ENCODE measurements at regions of chr2 and their contacts with region 1.

Region 1: GRCh38 chr2:70070541-70071268 is 16.6 kb upstream of the PCBP1 start:
- DNase-seq: peak; percentile 83
- ATAC-seq: peak; percentile 77
- H3K4me3 Mint-ChIP-seq: peak overlapping the region; percentile 68
- H3K27ac Mint-ChIP-seq: peak overlapping the region; percentile 96
- H3K4me1 Mint-ChIP-seq: peaks cover 46% of the 10 kb centered on the region
- H3K27me3 Mint-ChIP-seq: no peaks in the 10 kb centered on the region

Region 2: GRCh38 chr2:69946351-69947077 is 124.2 kb before region 1 on chr2:
- CTCF ChIA-PET with region 1: interaction called, 17 read pairs
- DNase-seq: peak; percentile 89
- ATAC-seq: peak; percentile 94
- H3K4me3 Mint-ChIP-seq: peak overlapping the region; percentile 52
- H3K27ac Mint-ChIP-seq: peak overlapping the region; percentile 93
- H3K4me1 Mint-ChIP-seq: peaks cover 41% of the 10 kb centered on the region
- H3K27me3 Mint-ChIP-seq: no peaks in the 10 kb centered on the region

Region 3: GRCh38 chr2:70043252-70043875 is 27.3 kb before region 1 on chr2:
- CTCF ChIA-PET with region 1: interaction called, 18 read pairs
- DNase-seq: peak; percentile 91
- ATAC-seq: peak; percentile 83
- H3K4me3 Mint-ChIP-seq: peak overlapping the region; percentile 55
- H3K27ac Mint-ChIP-seq: peak overlapping the region; percentile 98
- H3K4me1 Mint-ChIP-seq: peaks cover 67% of the 10 kb centered on the region
- H3K27me3 Mint-ChIP-seq: no peaks in the 10 kb centered on the region

Region 4: DNA sequence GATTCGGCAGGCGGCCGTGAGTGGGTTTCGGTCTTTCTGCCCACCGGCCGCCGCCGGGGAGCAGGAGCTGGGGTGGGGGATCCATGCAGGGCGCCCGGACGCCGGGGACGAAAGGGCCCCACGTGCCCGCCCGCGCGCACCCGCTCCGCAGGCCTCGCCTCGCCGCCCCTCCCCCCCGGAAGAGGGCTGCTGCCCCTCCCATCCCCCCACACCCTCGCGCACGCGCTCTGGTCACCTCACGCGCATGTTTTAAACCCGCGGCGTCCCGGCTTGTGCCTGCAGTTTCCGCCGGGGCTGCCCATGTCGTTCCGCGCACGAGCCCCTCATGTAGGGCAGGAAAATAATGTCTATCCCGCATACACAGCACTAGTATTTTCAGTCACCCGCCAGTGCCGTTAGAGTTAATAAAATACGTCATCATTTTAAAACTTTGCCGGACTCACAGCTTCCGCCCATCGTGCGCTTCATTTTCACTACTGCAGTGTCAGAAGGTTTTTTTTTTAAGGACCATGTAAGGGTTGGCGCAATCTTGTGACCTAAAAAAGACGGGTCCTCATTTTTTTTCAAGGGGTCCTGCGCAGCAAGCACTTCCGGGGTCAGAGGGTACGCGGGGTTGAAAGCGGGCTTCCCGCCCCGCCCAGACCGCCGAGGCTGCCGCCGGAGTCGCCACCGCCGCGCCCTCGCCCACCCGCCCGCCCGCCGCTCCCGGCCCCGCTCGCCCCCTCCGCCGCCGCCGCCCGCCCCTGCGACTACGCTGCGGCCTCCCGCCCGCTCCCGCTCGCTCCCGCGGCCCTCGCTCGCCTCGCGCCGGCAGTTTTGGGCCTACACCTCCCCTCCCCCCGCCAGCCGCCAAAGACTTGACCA is 16.4 kb after region 1 on chr2 and contains the start of gene PCBP1:
- CTCF ChIA-PET with region 1: interaction called, 90 read pairs
- DNase-seq: peak; percentile 96
- ATAC-seq: peak; percentile 55
- H3K4me3 Mint-ChIP-seq: peak within 1 kb of the TSS; percentile 100
- H3K27ac Mint-ChIP-seq: peak within 1 kb of the TSS; percentile 99
- H3K4me1 Mint-ChIP-seq: peaks cover 56% of the 10 kb centered on the region
- H3K27me3 Mint-ChIP-seq: no peaks in the 10 kb centered on the region
- total RNA-seq, gene PCBP1: 429 to 464 TPM